AG04450 (cell line): ENCODE measurements at regions of chr20 and their contacts with region 1.

Region 1: DNA sequence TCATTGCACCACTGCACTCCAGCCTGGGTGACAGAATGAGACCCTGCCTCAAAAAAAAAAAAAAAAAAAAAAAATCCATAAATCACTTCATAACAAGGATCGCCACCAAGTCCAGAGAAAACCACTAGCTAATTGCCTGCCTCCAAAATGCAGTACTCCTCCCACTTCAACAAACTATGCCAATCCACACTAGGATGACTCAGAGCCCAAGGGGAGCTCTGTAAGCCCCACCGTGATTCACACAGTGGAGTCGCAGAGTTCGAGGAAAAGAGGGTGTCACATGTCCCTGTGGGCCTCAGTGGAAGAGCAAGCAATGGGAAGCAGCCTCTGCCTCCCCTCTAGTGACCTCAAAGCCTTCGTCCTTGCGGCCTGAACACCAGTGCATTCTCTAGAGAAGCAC is 9.1 kb downstream of the SNHG17 start:
- DNase-seq: peak; percentile 69
- H3K4me3 ChIP-seq: no peak overlapping the region
- H3K27ac ChIP-seq: peak overlapping the region; percentile 70
- H3K27me3 ChIP-seq: no peaks in the 10 kb centered on the region
- CTCF ChIP-seq: no peak

Region 2: DNA sequence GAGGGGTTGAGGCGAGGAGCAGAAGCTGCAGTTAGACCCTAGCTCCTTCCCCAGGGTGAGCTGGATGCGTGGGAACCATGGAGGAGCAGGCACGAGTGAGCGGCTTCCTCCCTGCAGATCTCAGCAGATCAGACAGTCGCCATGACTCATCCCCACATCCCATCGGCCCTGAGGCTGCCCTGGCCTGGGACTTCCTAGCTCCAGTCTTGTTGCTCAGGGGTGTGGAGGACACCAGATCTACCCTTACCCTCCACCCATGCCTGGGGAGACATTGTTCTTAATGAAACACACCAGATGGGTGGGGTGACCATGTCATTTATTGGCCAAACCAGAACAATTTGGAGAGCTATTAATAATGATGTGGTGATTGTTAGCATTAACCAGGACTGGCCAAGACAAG is 224.7 kb before region 1 on chr20:
- CTCF ChIA-PET with region 1: no interaction called
- POLR2A ChIA-PET with region 1: no interaction called
- DNase-seq: peak; percentile 61
- H3K4me3 ChIP-seq: no peak overlapping the region
- H3K27ac ChIP-seq: peak overlapping the region; percentile 52
- H3K27me3 ChIP-seq: peaks cover 4% of the 10 kb centered on the region
- CTCF ChIP-seq: no peak

Region 3: GRCh38 chr20:38231531-38232121 is 194.4 kb before region 1 on chr20:
- CTCF ChIA-PET with region 1: no interaction called
- POLR2A ChIA-PET with region 1: no interaction called
- DNase-seq: no peak
- H3K4me3 ChIP-seq: no peak overlapping the region
- H3K27ac ChIP-seq: peak overlapping the region; percentile 31
- H3K27me3 ChIP-seq: no peaks in the 10 kb centered on the region
- CTCF ChIP-seq: no peak

Region 4: DNA sequence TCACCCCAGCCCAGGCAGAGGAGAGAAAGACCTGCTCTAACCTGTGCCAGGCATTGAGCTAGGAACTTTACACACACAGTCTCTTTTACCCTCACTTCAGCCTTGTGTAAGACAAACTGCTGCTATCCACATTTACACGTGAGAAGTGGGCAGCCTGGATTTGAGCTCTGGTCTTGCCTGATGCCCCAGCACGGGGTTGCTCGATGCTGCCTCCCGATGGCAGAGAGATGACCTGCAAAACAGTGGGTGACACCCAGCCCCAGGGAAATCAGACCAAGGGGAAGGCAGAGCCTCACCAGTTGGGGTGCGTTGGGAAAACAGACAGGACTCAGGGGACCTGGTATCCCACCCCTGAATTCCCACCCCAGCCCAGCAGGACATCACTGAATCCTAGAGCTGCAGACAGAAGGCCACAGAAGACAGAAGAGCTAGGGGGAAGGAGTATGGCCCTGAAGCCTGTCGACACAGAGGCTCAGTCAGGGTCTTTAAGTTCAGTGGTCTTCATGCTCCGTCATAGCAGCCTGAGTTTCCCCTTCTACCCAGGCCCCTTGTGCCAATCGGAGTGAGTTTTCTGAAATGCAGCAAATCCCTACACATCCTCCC is 121.1 kb before region 1 on chr20:
- CTCF ChIA-PET with region 1: no interaction called
- POLR2A ChIA-PET with region 1: no interaction called
- DNase-seq: no peak
- H3K4me3 ChIP-seq: no peak overlapping the region
- H3K27ac ChIP-seq: no peak overlapping the region
- H3K27me3 ChIP-seq: peaks cover 20% of the 10 kb centered on the region
- CTCF ChIP-seq: peak; percentile 65

Region 5: GRCh38 chr20:38395165-38395564 is 30.8 kb before region 1 on chr20:
- CTCF ChIA-PET with region 1: no interaction called
- POLR2A ChIA-PET with region 1: interaction called, 13 read pairs
- DNase-seq: no peak
- H3K4me3 ChIP-seq: no peak overlapping the region
- H3K27ac ChIP-seq: no peak overlapping the region
- H3K27me3 ChIP-seq: peaks cover 14% of the 10 kb centered on the region
- CTCF ChIP-seq: no peak